ENCODE measurements at regions of chr3 and their contacts with region 1.

Region 1: DNA sequence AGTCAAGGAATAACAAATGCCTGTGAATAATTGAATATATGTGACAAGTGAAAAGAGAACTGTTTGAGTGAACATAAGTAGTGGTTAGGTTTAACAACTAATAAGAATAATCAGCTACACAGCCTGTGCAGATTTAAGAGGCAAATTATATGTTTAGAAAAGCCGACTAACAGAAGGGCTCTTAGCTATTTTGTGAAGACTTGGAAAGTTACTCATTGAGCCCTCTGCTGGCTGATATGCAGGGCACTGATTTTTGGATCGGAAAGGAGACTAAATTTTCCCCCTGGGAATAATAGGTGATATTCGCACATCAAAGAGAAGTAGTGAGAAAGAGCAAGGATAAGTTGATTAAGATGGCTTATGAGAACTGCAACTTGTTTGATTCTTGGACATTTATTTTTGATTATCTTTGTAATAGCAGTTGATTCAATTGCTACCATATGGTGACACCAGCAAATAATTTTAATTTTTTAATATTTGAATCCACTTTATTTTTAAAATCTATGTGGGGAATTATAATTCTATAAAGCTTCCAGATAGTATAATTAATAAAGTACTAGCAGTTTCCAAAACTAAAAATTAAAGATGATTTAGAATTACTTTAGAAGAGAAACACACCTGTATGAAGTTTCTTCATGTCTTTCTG is 156.2 kb downstream of the NLGN1 start:
- DNase-seq: no peak
- ATAC-seq: no peak
- H3K4me3 ChIP-seq: no peak overlapping the region
- H3K27ac ChIP-seq: no peak overlapping the region
- H3K4me1 ChIP-seq: no peaks in the 10 kb centered on the region
- H3K27me3 ChIP-seq: no peaks in the 10 kb centered on the region

Region 2: DNA sequence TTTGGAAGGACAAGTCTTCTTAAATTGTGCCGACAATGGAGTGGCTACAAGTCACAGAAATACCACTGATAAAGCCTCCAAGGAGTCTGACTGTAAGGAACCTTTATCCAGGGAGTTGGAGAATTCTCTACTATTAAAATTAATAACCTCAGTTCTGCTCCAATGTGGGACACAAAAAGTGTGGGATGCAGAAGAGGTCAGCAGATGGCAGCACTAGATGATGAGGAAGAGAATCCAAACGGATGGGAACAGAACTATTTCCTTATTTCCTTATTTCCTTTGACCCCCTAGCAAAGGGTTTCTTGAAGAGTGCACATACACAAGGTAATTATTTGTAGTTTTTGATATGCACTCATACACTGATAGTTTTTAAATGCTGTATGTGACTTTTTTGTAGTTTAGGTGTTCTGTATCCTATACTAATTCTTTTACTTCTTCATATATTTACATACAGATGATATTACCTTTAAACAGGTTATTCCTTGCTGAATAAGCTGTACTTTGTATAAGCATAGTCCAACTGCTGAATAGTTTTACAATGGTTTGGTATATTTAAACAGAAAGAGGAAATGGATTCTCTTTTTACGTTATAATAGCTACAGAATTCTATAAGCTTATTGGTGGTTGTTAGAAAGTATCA is 181.8 kb before region 1 on chr3:
- intact Hi-C with region 1: loop called (anchors 5 kb)
- DNase-seq: peak in 1 of 2 donors; percentile 37
- ATAC-seq: no peak
- H3K4me3 ChIP-seq: no peak overlapping the region
- H3K27ac ChIP-seq: no peak overlapping the region
- H3K4me1 ChIP-seq: no peaks in the 10 kb centered on the region
- H3K27me3 ChIP-seq: no peaks in the 10 kb centered on the region

Region 3: DNA sequence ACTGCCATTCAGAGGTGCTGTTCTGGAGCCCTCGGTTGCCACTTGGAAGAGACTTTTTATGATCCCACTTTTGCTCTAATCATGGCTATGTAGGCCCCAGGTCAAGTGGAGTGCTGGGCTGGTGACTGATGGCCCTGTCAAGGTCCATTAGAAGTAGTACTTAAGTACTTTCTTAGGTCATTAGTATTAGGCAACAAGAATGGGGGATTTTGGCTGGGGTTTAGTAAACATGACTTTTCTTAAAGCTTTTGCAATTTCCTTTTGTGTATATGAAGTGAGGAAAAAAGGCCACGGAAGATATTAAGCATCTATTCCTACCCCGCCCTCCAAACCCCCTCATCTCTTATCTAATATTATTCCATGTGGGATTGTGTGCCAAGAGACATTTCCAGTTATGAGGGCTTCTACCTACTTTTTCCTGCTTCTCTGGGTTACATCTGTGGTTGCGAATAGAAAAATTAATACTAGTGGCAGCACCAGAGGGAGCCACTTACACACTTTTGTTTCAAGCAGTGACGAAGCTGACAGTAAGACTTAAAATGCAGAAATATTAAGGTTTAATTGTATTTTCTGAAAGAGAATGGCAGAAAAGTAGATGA is 142.3 kb before region 1 on chr3:
- intact Hi-C with region 1: loop called in 1 of 2 experiments (anchors 5 kb)
- DNase-seq: no peak
- ATAC-seq: no peak
- H3K4me3 ChIP-seq: peak overlapping the region in 1 of 2 donors; percentile 11
- H3K27ac ChIP-seq: no peak overlapping the region
- H3K4me1 ChIP-seq: no peaks in the 10 kb centered on the region
- H3K27me3 ChIP-seq: no peaks in the 10 kb centered on the region

Region 4: GRCh38 chr3:173568623-173569022 is 14.9 kb after region 1 on chr3:
- intact Hi-C with region 1: no loop called
- DNase-seq: peak in 1 of 2 donors; percentile 40
- ATAC-seq: no peak
- H3K4me3 ChIP-seq: no peak overlapping the region
- H3K27ac ChIP-seq: no peak overlapping the region
- H3K4me1 ChIP-seq: no peaks in the 10 kb centered on the region
- H3K27me3 ChIP-seq: no peaks in the 10 kb centered on the region

Region 5: DNA sequence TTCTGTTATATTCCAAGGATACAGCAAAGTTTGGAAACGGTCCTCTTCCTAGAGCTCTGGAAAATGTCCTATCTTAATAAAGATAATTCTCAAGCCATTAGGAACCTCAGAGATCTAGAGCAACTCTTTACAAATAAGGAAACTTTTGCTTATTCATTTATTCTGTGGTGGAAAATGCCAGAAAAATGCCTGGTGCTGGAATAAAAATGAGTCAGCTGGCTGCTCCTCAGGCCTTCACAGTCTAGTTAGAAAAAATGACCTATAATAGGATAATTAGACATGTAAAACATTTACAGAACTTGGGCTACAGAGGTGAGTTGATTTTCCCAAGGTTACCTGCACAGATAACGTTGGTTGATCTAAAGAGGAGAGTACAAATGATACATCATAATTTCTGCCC is 216.3 kb after region 1 on chr3:
- intact Hi-C with region 1: no loop called
- DNase-seq: no peak
- ATAC-seq: no peak
- H3K4me3 ChIP-seq: no peak overlapping the region
- H3K27ac ChIP-seq: no peak overlapping the region
- H3K4me1 ChIP-seq: no peaks in the 10 kb centered on the region
- H3K27me3 ChIP-seq: no peaks in the 10 kb centered on the region